ENCODE measurements at regions of chr16 and their contacts with region 1.

Region 1: DNA sequence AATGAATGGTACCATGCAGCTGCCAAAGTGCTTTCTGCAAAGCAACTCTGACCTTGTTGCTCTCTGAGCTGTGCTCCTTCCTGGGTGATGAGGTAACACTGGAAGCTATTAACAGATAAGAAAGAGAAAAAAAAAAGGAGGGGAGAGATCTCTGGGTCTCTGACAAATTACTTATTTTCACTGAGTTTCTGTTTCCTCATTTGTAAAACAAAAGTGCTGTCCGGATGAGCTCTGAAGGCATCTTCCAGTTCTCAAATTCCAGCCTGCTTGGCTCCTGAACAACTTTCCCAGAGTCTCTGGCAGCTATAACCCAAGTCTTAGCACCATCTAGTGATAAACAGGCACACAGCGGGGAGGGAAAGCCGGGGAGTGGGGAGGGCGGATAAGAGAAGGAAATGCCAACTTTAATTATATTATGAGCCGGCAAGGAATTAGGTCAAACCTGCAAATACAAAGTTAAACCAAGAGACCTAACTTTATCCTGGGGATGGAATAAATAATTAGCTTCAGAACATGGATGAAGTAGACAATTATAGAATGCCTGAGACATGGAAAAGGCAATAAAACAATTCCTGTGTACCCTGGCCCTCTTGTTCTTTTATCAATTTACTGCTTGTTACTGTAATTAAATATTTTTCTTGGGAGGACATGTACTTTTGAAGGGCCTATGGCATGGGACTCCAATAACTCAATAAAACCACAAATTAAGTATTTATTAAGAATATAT is 61.3 kb upstream of the KIFC3 start:
- DNase-seq: peak; percentile 73 to 77
- H3K4me3 ChIP-seq: no peak overlapping the region
- H3K4me3 Mint-ChIP-seq: peak overlapping the region; percentile 79
- H3K27ac Mint-ChIP-seq: peak overlapping the region; percentile 71
- H3K4me1 ChIP-seq: peaks cover 38% of the 10 kb centered on the region
- H3K4me1 Mint-ChIP-seq: peaks cover 29% of the 10 kb centered on the region
- H3K27me3 ChIP-seq: no peaks in the 10 kb centered on the region
- H3K27me3 Mint-ChIP-seq: no peaks in the 10 kb centered on the region
- CTCF ChIP-seq: peak; percentile 36 to 87

Region 2: DNA sequence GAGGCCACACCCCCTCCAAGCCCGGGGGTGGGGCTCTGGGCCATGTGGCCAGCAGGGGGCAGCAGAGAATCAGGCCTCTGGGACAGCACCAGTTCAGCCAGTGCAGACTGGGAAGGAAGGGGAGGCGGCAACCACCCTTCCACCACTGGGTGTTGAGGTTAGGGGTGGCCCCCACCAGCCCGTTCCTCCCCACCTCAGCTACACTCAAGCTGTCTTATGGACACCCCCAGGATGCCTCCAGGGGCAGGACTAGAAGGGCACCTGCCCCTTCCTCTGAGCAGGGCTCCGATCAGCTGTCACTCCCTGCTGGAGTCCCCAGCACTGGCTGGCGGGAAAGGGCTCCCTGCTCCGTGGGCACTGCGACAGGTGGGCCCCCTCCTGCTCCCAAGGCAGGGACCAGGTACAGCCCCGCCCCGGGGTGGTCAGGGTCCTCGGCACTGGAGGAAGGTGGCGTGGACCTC is 106.2 kb before region 1 on chr16:
- CTCF ChIA-PET with region 1: interaction called, 13 read pairs
- POLR2A ChIA-PET with region 1: no interaction called
- intact Hi-C with region 1: loop called (anchors 1 kb)
- DNase-seq: peak; percentile 89 to 97
- H3K4me3 ChIP-seq: no peak overlapping the region
- H3K4me3 Mint-ChIP-seq: no peak overlapping the region
- H3K27ac Mint-ChIP-seq: no peak overlapping the region
- H3K4me1 ChIP-seq: peaks cover 17% of the 10 kb centered on the region
- H3K4me1 Mint-ChIP-seq: peaks cover 20% of the 10 kb centered on the region
- H3K27me3 ChIP-seq: no peaks in the 10 kb centered on the region
- H3K27me3 Mint-ChIP-seq: no peaks in the 10 kb centered on the region
- CTCF ChIP-seq: peak; percentile 95 to 99

Region 3: GRCh38 chr16:57795431-57795878 is 68.1 kb before region 1 on chr16:
- CTCF ChIA-PET with region 1: interaction called, 63 read pairs
- POLR2A ChIA-PET with region 1: interaction called, 10 read pairs
- intact Hi-C with region 1: loop called (anchors 1 kb)
- DNase-seq: peak; percentile 76 to 82
- H3K4me3 ChIP-seq: no peak overlapping the region
- H3K4me3 Mint-ChIP-seq: peak overlapping the region; percentile 9
- H3K27ac Mint-ChIP-seq: peak overlapping the region; percentile 69
- H3K4me1 ChIP-seq: peaks cover 46% of the 10 kb centered on the region
- H3K4me1 Mint-ChIP-seq: peaks cover 40% of the 10 kb centered on the region
- H3K27me3 ChIP-seq: no peaks in the 10 kb centered on the region
- H3K27me3 Mint-ChIP-seq: no peaks in the 10 kb centered on the region
- CTCF ChIP-seq: peak; percentile 75

Region 4: GRCh38 chr16:57810197-57811031 is 53.2 kb before region 1 on chr16:
- CTCF ChIA-PET with region 1: interaction called, 19 read pairs
- POLR2A ChIA-PET with region 1: interaction called, 7 read pairs
- intact Hi-C with region 1: no loop called
- DNase-seq: peak; percentile 92 to 97
- H3K4me3 ChIP-seq: no peak overlapping the region
- H3K4me3 Mint-ChIP-seq: peak overlapping the region; percentile 51
- H3K27ac Mint-ChIP-seq: peak overlapping the region; percentile 93
- H3K4me1 ChIP-seq: peaks cover 86% of the 10 kb centered on the region
- H3K4me1 Mint-ChIP-seq: peaks cover 73% of the 10 kb centered on the region
- H3K27me3 ChIP-seq: no peaks in the 10 kb centered on the region
- H3K27me3 Mint-ChIP-seq: no peaks in the 10 kb centered on the region
- CTCF ChIP-seq: no peak

Region 5: GRCh38 chr16:57821149-57821986 is 42.2 kb before region 1 on chr16:
- CTCF ChIA-PET with region 1: interaction called, 15 read pairs
- POLR2A ChIA-PET with region 1: interaction called, 5 read pairs
- intact Hi-C with region 1: loop called (anchors 1 kb)
- DNase-seq: peak; percentile 86 to 88
- H3K4me3 ChIP-seq: no peak overlapping the region
- H3K4me3 Mint-ChIP-seq: peak overlapping the region; percentile 40
- H3K27ac Mint-ChIP-seq: peak overlapping the region; percentile 93
- H3K4me1 ChIP-seq: peaks cover 88% of the 10 kb centered on the region
- H3K4me1 Mint-ChIP-seq: peaks cover 80% of the 10 kb centered on the region
- H3K27me3 ChIP-seq: no peaks in the 10 kb centered on the region
- H3K27me3 Mint-ChIP-seq: no peaks in the 10 kb centered on the region
- CTCF ChIP-seq: no peak

Region 6: GRCh38 chr16:57840833-57841232 is 22.8 kb before region 1 on chr16:
- CTCF ChIA-PET with region 1: interaction called, 6 read pairs
- POLR2A ChIA-PET with region 1: no interaction called
- intact Hi-C with region 1: loop called (anchors 2 kb)
- DNase-seq: peak in 1 of 2 experiments; percentile 41
- H3K4me3 ChIP-seq: no peak overlapping the region
- H3K4me3 Mint-ChIP-seq: no peak overlapping the region
- H3K27ac Mint-ChIP-seq: peak overlapping the region; percentile 39
- H3K4me1 ChIP-seq: peaks cover 20% of the 10 kb centered on the region
- H3K4me1 Mint-ChIP-seq: peaks cover 30% of the 10 kb centered on the region
- H3K27me3 ChIP-seq: no peaks in the 10 kb centered on the region
- H3K27me3 Mint-ChIP-seq: no peaks in the 10 kb centered on the region
- CTCF ChIP-seq: no peak

Region 7: DNA sequence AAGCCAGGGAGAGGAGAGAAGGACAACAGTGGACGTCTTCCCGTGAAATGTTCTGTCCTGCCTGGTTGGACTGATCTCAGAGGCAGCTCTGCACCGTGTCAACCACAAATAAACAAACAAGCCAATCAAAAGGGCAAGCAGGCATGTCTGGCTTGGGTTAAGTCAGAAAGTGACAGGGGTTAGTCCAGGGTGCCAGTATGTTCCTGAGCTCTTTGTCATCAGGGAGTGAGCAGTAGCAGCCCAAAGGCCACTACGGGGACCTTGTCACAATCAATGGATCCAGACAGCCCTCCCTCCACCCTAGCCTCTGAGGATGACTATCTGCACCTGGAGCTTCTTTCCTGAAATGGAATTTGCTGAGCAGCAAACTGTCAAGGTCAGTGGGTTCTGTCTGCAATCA is 72.3 kb after region 1 on chr16:
- CTCF ChIA-PET with region 1: no interaction called
- POLR2A ChIA-PET with region 1: no interaction called
- intact Hi-C with region 1: no loop called
- DNase-seq: no peak
- H3K4me3 ChIP-seq: no peak overlapping the region
- H3K4me3 Mint-ChIP-seq: no peak overlapping the region
- H3K27ac Mint-ChIP-seq: no peak overlapping the region
- H3K4me1 ChIP-seq: no peaks in the 10 kb centered on the region
- H3K4me1 Mint-ChIP-seq: no peaks in the 10 kb centered on the region
- H3K27me3 ChIP-seq: no peaks in the 10 kb centered on the region; the same call in 1 of the 2 replicates
- H3K27me3 Mint-ChIP-seq: no peaks in the 10 kb centered on the region
- CTCF ChIP-seq: no peak

Measured in Caco-2 (cell line).